Endothelial cell of umbilical vein (primary cell): ENCODE measurements at regions of chr5 and their contacts with region 1.

Region 1: GRCh38 chr5:168219515-168220410 is 71.7 kb upstream of the WWC1 start:
- DNase-seq: peak; percentile 72
- H3K4me3 ChIP-seq: no peak overlapping the region
- H3K27ac ChIP-seq: no peak overlapping the region
- H3K4me1 ChIP-seq: peaks cover 8% of the 10 kb centered on the region
- H3K27me3 ChIP-seq: peaks cover 2 to 12% of the 10 kb centered on the region in 2 experiments
- CTCF ChIP-seq: peak; percentile 75 to 84
- POLR2A ChIP-seq: no peak

Region 2: DNA sequence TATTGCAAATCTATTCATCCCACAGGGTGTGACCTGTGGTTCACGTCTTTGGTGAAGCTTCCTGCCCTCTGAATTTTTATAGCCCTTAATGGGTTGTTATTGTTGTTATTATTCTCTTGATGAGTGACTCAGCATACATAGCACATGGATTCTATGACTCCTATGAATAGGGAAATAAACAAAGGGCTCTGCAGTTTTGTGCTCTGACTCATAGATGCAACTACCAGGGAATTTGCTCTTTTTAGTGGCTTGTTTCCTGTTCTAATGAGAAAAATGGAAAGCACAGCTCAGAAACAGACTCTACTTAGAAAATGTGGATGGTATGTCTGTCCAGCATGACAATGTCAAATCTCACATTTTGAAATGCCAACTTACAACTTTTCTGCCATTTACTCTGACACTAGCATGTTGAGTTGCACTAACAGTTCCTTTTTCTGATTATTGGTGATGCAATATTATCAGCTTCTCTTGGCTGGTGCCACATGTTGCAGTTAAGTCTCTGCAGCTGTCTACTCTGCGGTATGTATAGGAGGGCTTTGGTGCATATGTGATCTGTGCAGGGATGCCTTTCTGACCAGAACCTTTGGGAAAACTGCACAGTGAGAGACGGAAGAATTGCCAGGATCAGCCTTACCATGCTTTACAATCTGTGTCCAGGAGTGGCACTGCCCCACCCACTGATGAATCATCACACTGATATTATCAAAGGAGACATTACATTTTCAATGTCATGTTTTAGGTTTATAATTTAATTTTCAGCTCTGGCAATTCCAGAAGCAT is 924.7 kb before region 1 on chr5:
- CTCF ChIA-PET with region 1: no interaction called
- POLR2A ChIA-PET with region 1: no interaction called
- dilution Hi-C with region 1: no loop called
- intact Hi-C with region 1: loop called (anchors 2 kb)
- DNase-seq: peak; percentile 92
- H3K4me3 ChIP-seq: peak overlapping the region in 1 of 3 experiments; percentile 33
- H3K27ac ChIP-seq: peak overlapping the region; percentile 88
- H3K4me1 ChIP-seq: peaks cover 28% of the 10 kb centered on the region
- H3K27me3 ChIP-seq: no peaks in the 10 kb centered on the region
- CTCF ChIP-seq: no peak
- POLR2A ChIP-seq: no peak

Region 3: GRCh38 chr5:167723254-167723871 is 496.4 kb before region 1 on chr5:
- CTCF ChIA-PET with region 1: interaction called, 70 read pairs
- POLR2A ChIA-PET with region 1: no interaction called
- dilution Hi-C with region 1: no loop called
- intact Hi-C with region 1: loop called (anchors 1 kb)
- DNase-seq: peak; percentile 61
- H3K4me3 ChIP-seq: no peak overlapping the region
- H3K27ac ChIP-seq: no peak overlapping the region
- H3K4me1 ChIP-seq: no peaks in the 10 kb centered on the region
- H3K27me3 ChIP-seq: no peaks in the 10 kb centered on the region
- CTCF ChIP-seq: peak; percentile 79 to 86
- POLR2A ChIP-seq: no peak

Region 4: GRCh38 chr5:168114444-168115017 is 105.2 kb before region 1 on chr5:
- CTCF ChIA-PET with region 1: interaction called, 4 read pairs
- POLR2A ChIA-PET with region 1: no interaction called
- dilution Hi-C with region 1: no loop called
- intact Hi-C with region 1: loop called (anchors 1 kb)
- DNase-seq: peak; percentile 12
- H3K4me3 ChIP-seq: no peak overlapping the region
- H3K27ac ChIP-seq: no peak overlapping the region
- H3K4me1 ChIP-seq: no peaks in the 10 kb centered on the region
- H3K27me3 ChIP-seq: no peaks in the 10 kb centered on the region
- CTCF ChIP-seq: peak; percentile 32 to 47
- POLR2A ChIP-seq: no peak

Region 5: DNA sequence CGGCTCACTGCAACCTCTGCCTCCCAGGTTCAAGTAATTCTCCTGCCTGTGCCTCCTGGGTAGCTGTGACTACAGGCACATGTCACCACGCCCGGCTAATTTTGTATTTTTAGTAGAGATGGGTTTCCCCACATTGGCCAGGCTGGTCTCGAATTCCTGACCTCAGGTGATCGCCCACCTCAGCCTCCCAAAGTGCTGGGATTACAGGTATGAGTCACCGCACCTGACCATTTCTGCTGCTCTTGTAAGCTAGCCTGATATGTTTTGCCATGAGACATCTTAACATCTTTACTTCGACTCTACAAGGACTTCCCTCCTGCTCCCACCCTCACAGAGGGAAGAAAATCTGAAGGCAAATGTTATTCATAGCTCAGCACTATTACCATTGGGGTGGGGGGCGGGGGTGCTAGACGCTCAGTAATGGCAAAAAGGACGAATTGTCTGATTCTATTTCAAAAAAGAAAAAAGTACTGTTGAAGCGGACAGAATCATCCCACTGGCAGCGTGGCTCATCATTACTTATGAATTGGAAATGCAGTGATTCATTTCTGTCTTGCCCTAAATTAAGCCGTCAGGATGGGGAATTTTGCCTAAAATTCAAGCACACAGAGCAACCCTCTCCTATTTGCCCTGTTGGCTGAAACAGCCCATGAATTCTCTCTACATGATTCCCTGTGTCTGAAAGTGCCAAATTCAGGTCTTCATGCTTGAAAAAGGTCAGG is 25.2 kb after region 1 on chr5:
- CTCF ChIA-PET with region 1: interaction called, 10 read pairs
- POLR2A ChIA-PET with region 1: no interaction called
- dilution Hi-C with region 1: no loop called
- intact Hi-C with region 1: no loop called
- DNase-seq: no peak
- H3K4me3 ChIP-seq: no peak overlapping the region
- H3K27ac ChIP-seq: no peak overlapping the region
- H3K4me1 ChIP-seq: no peaks in the 10 kb centered on the region
- H3K27me3 ChIP-seq: no peaks in the 10 kb centered on the region
- CTCF ChIP-seq: no peak
- POLR2A ChIP-seq: no peak

Region 6: GRCh38 chr5:168268949-168269943 is 49.5 kb after region 1 on chr5:
- CTCF ChIA-PET with region 1: interaction called, 10 read pairs
- POLR2A ChIA-PET with region 1: no interaction called
- dilution Hi-C with region 1: no loop called
- intact Hi-C with region 1: no loop called
- DNase-seq: peak; percentile 87
- H3K4me3 ChIP-seq: peak overlapping the region in 1 of 3 experiments; percentile 3
- H3K27ac ChIP-seq: no peak overlapping the region
- H3K4me1 ChIP-seq: no peaks in the 10 kb centered on the region
- H3K27me3 ChIP-seq: no peaks in the 10 kb centered on the region
- CTCF ChIP-seq: peak; percentile 87 to 88
- POLR2A ChIP-seq: no peak